ENCODE measurements at regions of chr1 and their contacts with region 1.

Region 1: DNA sequence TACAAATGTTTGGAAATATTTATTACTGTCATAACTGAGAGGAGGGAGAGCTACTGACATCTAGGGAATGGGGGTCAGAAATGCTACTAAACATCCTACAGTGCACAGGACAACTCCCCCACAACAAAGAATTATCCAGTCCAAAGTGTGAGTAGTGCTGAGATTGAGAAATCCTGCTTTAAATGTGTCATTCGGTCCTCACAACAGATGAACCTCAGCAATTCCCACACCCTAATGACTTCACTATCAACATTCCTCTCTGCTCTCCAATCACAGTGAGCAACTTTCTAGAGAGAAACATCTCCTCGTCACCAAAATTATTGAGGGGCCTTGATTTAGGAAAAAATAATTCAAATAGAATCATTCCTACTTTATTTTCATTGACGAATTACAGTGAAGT is 18.0 kb downstream of the OMA1 start:
- DNase-seq: no peak
- ATAC-seq: no peak
- H3K4me3 Mint-ChIP-seq: no peak overlapping the region
- H3K27ac Mint-ChIP-seq: no peak overlapping the region
- H3K4me1 Mint-ChIP-seq: peaks cover 14% of the 10 kb centered on the region
- H3K27me3 Mint-ChIP-seq: no peaks in the 10 kb centered on the region
- CTCF ChIP-seq: no peak

Region 2: DNA sequence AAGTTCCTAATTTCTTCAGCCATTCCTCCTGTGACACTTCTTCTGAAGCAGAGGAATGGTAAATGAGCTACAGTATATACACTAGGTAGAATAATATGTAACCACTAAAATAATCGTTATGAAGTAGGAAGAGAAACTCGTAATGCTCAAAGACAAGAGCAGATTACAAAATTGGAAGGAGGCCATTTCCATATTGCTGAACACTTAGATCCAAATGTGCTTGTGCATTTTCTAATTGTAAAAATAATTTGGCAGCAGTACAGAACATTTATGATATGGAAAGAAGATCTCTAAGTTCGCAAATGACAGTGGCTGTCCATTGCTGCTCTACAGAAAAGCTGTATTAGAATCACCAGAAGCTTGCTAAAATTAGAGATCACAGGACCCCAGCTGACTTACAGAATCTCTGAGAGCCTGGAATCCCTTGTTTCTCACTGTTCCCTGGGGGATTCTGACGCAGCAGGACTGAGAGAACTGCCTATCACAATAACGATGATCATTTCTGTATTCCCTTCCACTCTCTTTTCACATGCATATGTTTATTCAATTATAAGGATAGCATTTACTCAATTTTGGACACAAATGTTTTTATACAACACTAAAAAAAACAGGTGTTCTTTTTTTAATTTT is 224.1 kb before region 1 on chr1:
- CTCF ChIA-PET with region 1: no interaction called
- POLR2A ChIA-PET with region 1: no interaction called
- intact Hi-C with region 1: no loop called
- DNase-seq: no peak
- ATAC-seq: no peak
- H3K4me3 Mint-ChIP-seq: no peak overlapping the region
- H3K27ac Mint-ChIP-seq: no peak overlapping the region
- H3K4me1 Mint-ChIP-seq: no peaks in the 10 kb centered on the region
- H3K27me3 Mint-ChIP-seq: no peaks in the 10 kb centered on the region
- CTCF ChIP-seq: no peak

Region 3: GRCh38 chr1:58546520-58547308 is 18.2 kb after region 1 on chr1 and contains the start of gene OMA1:
- CTCF ChIA-PET with region 1: interaction called, 20 read pairs
- POLR2A ChIA-PET with region 1: interaction called, 4 read pairs
- intact Hi-C with region 1: no loop called
- DNase-seq: peak; percentile 97
- ATAC-seq: peak; percentile 95
- H3K4me3 Mint-ChIP-seq: peak within 1 kb of the TSS; percentile 93
- H3K27ac Mint-ChIP-seq: peak within 1 kb of the TSS; percentile 95
- H3K4me1 Mint-ChIP-seq: peaks cover 18% of the 10 kb centered on the region
- H3K27me3 Mint-ChIP-seq: no peaks in the 10 kb centered on the region
- CTCF ChIP-seq: peak; percentile 78
- total RNA-seq, gene OMA1: 14.7 to 14.9 TPM

Measured in activated CD8-positive, alpha-beta T cell treated with anti-CD3 and anti-CD28 coated beads for 36 hours (primary cell).